Activated CD4-positive, alpha-beta T cell treated with anti-CD3 and anti-CD28 coated beads for 36 hours (primary cell): ENCODE measurements at regions of chr13 and their contacts with region 1.

Region 1: DNA sequence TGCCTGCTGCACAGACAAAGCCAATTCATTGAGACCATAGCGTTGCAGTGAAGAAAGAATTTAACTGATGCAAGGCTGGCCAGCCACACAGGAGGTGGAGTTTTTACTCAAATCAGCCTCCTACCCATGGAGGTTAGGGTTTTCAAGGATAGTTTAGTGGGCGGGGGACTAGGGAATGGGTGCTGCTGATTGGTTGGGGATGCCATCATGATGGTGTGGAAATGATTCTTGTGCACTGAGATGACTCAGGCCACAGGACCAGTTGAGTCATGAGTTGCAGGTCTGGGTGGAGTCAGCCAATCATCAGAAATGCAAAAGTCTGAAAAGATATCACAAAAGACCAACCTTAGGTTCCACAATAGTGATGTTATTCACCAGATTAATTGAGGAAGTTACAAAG is 359.6 kb downstream of the FOXO1 start:
- DNase-seq: peak; percentile 81
- ATAC-seq: peak; percentile 95
- H3K4me3 Mint-ChIP-seq: no peak overlapping the region
- H3K27ac Mint-ChIP-seq: peak overlapping the region; percentile 69
- H3K4me1 Mint-ChIP-seq: peaks cover 28% of the 10 kb centered on the region
- H3K27me3 Mint-ChIP-seq: no peaks in the 10 kb centered on the region

Region 2: GRCh38 chr13:40285634-40286033 is 21.2 kb before region 1 on chr13:
- CTCF ChIA-PET with region 1: interaction called, 10 read pairs
- POLR2A ChIA-PET with region 1: no interaction called
- intact Hi-C with region 1: no loop called
- DNase-seq: no peak
- ATAC-seq: no peak
- H3K4me3 Mint-ChIP-seq: no peak overlapping the region
- H3K27ac Mint-ChIP-seq: no peak overlapping the region
- H3K4me1 Mint-ChIP-seq: peaks cover 10% of the 10 kb centered on the region
- H3K27me3 Mint-ChIP-seq: no peaks in the 10 kb centered on the region